Activated CD8-positive, alpha-beta memory T cell treated with anti-CD3 and anti-CD28 coated beads, Interleukin-2, amount 10 ng/mL, durations not matched to agents 7 days and 5 days (primary cell): ENCODE measurements at regions of chr20 and their contacts with region 1.

Region 1: DNA sequence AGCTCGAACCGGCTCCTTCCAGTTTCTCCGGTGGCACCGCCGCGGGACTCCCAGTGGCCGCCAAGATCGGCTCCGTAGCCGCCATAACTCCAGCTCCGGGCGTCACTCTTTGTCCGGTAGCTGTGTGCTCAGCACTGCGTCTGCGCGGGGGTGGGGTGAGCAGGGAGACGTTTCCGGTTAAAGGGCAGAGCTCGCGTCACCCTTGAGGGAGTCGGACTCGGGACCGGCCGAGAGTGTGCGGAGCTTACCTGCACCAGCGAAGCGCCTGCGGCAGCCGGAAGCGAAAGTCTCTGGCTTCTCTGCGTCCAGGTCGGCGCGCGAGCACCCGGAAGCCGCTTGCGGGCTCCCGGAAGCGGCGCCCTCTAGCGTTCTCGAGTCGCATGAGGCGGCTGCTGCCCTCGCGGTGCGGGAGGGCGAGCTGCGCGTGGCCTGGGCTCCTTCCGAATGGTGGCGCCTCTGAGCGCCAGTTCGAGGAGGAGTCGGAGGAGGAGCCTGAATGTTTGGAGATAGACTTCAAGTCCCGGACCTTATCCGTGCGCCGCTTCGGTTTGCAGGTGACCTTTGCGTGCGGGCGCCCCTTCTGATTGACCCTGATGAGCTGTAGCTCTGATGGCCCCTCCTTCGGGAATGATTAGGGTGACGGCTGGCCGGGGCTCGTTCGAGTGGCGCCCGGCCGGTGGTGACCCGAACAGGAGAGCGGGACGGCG is at the start of gene SCAND1:
- DNase-seq: peak; percentile 99
- ATAC-seq: peak; percentile 89
- H3K4me3 Mint-ChIP-seq: peak within 1 kb of the TSS; percentile 90
- H3K27ac Mint-ChIP-seq: peak within 1 kb of the TSS; percentile 100
- H3K4me1 Mint-ChIP-seq: peaks cover 23% of the 10 kb centered on the region
- H3K27me3 Mint-ChIP-seq: no peaks in the 10 kb centered on the region
- total RNA-seq, gene SCAND1: 61.2 to 63.9 TPM

Region 2: DNA sequence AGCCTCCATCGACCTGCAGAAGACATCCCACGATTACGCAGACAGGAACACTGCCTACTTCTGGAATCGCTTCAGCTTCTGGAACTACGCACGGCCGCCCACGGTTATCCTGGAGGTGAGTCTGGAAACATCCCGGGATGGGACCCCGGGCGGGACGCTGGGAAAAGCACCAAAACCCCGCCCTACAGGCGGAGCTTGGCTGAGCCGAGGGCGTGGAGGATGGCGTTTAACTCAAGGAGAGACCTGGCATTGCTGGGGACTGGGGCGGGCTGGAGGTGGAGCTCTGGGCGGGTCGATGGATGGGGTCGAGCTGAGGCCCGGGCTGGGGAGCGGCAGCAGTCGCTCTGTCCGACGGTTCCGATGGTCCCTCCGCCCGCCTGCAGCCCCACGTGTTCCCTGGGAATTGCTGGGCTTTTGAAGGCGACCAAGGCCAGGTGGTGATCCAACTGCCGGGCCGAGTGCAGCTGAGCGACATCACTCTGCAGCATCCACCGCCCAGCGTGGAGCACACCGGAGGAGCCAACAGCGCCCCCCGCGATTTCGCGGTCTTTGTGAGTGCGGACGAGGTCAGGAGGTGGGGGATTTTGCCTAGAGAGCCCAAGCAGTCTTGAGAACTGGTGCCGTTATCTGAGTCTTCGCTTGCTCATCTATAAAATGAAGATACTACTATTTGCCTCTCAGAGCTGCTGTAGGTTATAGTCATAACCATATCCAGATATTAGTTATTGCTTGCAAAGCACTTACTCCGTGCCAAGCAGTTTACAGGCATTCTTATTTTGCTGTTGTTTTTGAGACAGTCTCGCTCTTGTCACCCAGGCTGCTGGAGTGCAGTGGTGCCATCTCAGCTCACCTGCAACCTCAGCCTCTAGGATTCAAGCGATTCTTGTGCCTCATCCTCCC is 334.9 kb before region 1 on chr20:
- CTCF ChIA-PET with region 1: interaction called, 13 read pairs
- DNase-seq: peak; percentile 87
- ATAC-seq: peak; percentile 43
- H3K4me3 Mint-ChIP-seq: peak overlapping the region; percentile 85
- H3K27ac Mint-ChIP-seq: peak overlapping the region; percentile 84
- H3K4me1 Mint-ChIP-seq: peaks cover 42% of the 10 kb centered on the region
- H3K27me3 Mint-ChIP-seq: no peaks in the 10 kb centered on the region

Region 3: DNA sequence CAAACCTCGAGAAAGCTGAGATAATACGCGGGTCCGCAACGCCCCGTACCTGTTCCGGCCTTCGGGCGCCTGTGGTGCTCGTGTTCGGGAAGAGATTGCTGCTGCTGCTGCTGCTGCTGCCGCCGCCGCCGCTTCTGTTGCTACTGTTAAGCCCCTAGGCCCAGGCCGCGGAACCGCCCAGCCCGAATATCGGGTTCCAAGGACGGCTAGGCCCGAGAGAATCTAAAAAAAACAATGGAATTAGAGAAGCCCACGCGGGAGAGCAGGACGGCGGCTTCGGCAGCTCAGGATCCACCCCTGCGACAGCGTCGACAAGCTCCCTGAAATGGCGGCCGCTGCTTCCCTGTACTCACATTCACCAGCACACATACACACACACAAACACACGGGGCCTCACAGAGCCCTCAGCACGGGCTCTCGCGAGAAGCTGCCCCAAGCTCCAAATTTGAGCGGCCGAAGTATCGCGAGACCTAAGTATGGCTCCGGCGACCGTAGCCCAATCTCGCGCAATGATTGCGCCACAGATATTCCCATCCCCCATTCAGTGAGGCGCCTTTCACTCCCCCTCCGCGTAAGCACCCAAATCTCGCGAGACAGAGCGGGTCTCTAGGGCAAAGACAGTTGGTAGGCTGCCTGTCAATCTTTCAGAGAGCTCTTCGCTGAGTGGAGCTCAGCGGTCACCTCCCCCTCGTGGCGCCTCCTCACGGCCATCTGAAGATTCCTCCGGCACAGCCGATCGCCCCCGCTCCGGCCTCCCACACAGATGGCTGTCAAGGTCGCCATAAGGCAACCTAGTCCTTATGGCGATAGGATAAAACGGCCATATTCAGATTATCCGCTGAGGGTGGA is 212.2 kb before region 1 on chr20 and contains the start of gene RBM39:
- CTCF ChIA-PET with region 1: interaction called, 47 read pairs
- DNase-seq: peak; percentile 100
- ATAC-seq: peak; percentile 85
- H3K4me3 Mint-ChIP-seq: peak within 1 kb of the TSS; percentile 94
- H3K27ac Mint-ChIP-seq: peak within 1 kb of the TSS; percentile 100
- H3K4me1 Mint-ChIP-seq: peaks cover 34% of the 10 kb centered on the region
- H3K27me3 Mint-ChIP-seq: no peaks in the 10 kb centered on the region
- total RNA-seq, gene RBM39: 357 to 360 TPM

Region 4: DNA sequence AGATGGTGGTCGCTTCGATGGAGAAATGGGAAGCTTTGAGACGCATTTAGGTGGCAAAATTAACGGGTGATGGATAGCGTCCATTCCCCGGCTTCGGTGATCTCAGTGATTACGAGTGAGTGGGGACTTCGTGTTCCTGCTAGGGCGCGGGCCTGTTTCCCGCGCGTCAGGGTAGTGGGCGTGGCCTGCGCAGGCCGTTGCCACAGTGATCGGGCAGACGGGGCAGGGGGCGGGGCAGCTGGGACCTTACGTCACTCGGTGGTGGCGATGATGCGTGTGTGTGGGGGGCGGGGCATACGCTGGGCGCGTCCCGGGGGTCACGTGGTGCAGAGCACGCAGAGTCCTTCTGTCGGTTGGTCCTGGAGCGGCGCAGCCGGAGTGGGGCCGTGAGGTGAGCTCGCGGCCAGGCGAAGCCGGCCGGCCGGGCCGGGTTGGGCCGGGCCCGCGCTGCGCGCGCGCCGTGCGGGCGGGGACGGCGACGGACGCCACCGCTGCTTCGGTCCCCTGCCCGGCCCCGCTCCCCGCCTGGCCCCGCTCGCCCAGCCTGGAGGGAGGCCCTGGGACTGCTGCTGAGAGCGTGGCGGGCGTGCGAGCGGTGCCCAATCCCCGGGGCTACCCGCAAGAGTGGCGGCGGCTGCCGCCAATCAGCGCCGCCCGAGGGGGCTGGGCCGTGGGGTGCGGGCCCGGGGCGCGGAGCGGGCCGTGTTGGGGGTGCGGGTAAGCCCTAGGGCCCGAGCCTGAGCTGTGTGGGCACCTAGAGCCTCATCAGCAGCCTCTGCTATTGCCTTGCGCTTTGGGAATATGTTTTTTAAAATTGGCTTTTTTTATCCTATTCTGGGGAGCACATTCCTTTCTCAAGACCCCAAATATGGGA is 182.4 kb before region 1 on chr20 and contains the start of gene PHF20:
- CTCF ChIA-PET with region 1: interaction called, 17 read pairs
- DNase-seq: peak; percentile 100
- ATAC-seq: peak; percentile 93
- H3K4me3 Mint-ChIP-seq: peak within 1 kb of the TSS; percentile 85
- H3K27ac Mint-ChIP-seq: peak within 1 kb of the TSS; percentile 92
- H3K4me1 Mint-ChIP-seq: peaks cover 65% of the 10 kb centered on the region
- H3K27me3 Mint-ChIP-seq: no peaks in the 10 kb centered on the region
- total RNA-seq, gene PHF20: 50.8 to 52.4 TPM

Region 5: DNA sequence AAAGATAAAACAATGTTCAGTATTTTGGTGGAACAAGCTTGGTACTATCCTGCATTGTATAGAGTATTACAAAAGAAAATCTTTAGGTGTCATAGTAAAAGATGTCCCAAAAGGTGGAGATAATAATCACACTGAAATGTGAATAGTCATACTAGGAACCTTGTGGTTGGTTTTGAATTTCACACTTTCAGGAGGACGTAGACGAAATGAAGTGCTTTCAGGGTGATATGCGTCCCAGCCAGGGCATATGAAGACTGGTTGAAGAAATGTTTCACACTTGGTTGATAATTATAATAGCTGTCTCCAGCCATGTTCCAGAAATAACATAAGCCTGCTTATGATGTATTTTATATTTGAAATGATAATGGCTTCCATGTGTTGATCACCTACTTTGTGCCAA is 60.4 kb before region 1 on chr20:
- CTCF ChIA-PET with region 1: interaction called, 11 read pairs
- DNase-seq: peak; percentile 61
- ATAC-seq: peak; percentile 98
- H3K4me3 Mint-ChIP-seq: no peak overlapping the region
- H3K27ac Mint-ChIP-seq: peak overlapping the region; percentile 8
- H3K4me1 Mint-ChIP-seq: peaks cover 22% of the 10 kb centered on the region
- H3K27me3 Mint-ChIP-seq: no peaks in the 10 kb centered on the region

Region 6: DNA sequence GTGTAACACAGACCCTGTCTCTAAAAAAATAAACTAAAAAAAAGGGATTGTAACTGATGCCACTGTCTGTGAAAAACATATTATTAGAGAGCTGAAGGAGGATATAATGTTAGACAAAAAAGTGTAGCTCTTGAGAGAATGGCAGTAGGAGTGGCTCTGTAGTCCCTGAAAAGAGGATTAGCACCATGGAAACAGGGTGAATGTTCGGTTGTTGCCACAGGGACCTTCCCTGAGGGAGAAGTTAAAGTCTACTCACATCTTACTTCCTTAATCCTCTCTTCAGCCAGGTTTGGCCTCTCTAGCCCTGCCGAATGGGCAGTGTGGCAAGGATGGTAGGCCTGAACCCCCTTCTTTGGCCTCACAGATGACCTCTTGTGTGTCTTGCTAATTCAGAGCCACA is 12.1 kb before region 1 on chr20:
- CTCF ChIA-PET with region 1: interaction called, 13 read pairs
- DNase-seq: no peak
- ATAC-seq: no peak
- H3K4me3 Mint-ChIP-seq: no peak overlapping the region
- H3K27ac Mint-ChIP-seq: no peak overlapping the region
- H3K4me1 Mint-ChIP-seq: no peaks in the 10 kb centered on the region
- H3K27me3 Mint-ChIP-seq: no peaks in the 10 kb centered on the region

Region 7: GRCh38 chr20:35978041-35978513 is 23.7 kb after region 1 on chr20:
- CTCF ChIA-PET with region 1: interaction called, 10 read pairs
- DNase-seq: no peak
- ATAC-seq: no peak
- H3K4me3 Mint-ChIP-seq: no peak overlapping the region
- H3K27ac Mint-ChIP-seq: no peak overlapping the region
- H3K4me1 Mint-ChIP-seq: no peaks in the 10 kb centered on the region
- H3K27me3 Mint-ChIP-seq: peaks cover 7% of the 10 kb centered on the region

Region 8: DNA sequence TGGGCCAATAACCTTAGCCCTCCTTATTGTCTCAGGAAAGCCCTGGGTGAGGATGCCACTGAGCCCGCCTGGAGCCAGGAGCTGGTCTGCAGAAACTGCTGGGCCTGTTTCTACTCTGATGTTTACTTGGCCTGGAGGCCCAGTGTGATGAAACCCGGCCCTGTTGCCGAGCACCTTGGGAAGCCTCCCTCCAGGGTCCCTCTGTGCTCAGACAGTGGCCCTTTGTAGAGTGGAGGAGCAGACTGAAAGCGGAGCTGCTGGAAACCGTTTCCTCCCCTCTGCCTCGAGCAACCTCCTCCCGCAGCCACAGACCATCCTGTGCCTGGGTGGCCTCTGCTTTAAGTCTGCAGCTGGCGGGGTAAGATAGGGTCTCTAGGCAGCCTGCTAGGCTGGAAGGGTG is 116.1 kb after region 1 on chr20:
- CTCF ChIA-PET with region 1: no interaction called
- DNase-seq: no peak
- ATAC-seq: no peak
- H3K4me3 Mint-ChIP-seq: no peak overlapping the region
- H3K27ac Mint-ChIP-seq: no peak overlapping the region
- H3K4me1 Mint-ChIP-seq: no peaks in the 10 kb centered on the region
- H3K27me3 Mint-ChIP-seq: peaks cover 26% of the 10 kb centered on the region